Sigmoid colon (tissue), 7 donors: ENCODE measurements at regions of chr20 and their contacts with region 1.

Region 1: DNA sequence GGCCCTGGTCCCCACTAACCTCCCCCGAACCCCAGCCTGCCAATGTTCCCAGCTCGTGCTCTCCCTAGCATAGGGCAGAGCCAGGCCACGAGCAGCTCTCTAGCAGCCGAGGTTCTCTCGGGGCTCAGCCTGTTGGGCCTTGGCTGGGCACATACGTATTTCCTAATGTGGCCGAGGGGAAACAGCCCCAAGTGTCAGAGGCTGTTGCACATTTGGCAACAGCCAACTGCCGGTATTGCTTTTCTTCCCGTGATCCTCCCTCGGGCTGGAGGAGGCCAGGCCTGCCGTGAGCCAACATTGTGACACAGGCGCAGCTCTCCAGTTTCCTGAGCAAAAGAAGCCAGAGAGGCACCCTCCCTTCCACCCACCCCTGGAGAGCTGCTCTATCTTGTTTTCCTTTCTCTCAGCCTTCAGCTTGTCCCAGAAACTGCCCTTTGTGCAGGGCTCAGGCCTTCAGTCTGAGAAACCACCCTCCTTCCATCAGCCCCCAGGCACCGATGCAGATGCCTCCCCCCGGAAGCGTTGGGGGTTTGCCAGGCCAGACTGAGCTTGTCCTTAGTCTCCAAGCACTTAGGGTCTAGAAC is 5.2 kb upstream of the BPI start:
- DNase-seq: peak; percentile 96
- H3K4me3 ChIP-seq: no peak overlapping the region
- H3K27ac ChIP-seq: peak overlapping the region; percentile 74 to 82 (median 80)
- H3K4me1 ChIP-seq: peaks cover 0 to 18% (median 16%) of the 10 kb centered on the region in 4 donors
- H3K27me3 ChIP-seq: peaks cover 0 to 4% (median 0%) of the 10 kb centered on the region in 3 donors
- CTCF ChIP-seq: no peak
- EP300 ChIP-seq: peak in 1 of 4 donors; percentile 13
- POLR2A ChIP-seq: no peak

Region 2: DNA sequence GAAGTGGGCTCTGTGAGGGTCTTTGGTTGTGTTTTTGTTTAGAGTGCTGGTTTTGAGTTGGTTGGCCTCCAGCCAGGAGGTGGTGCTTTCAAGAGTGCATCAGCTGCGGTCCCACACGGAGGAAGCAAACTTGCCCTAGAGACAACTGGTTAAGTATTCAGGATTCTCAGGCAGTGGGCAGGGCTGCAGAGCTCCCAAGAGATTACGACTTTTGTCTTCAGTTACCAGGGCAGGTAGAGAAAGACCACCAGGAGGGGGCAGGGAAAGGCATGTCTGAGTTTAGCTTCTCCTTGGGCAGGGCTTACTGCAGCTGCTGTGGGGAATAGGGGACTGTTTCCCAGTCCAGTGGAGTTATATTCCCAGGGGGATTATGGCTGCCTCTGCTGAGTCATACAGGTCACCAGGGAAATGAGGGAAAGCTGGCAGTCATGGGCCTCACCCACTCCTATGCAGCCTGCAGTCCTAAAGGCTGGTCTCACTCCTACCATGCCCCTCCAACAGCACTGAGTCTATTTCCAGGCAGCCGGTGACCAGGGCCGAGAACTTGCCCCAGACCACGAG is 329.9 kb before region 1 on chr20:
- intact Hi-C with region 1: no loop called
- DNase-seq: no peak
- H3K4me3 ChIP-seq: no peak overlapping the region
- H3K27ac ChIP-seq: no peak overlapping the region
- H3K4me1 ChIP-seq: no peaks in the 10 kb centered on the region
- H3K27me3 ChIP-seq: no peaks in the 10 kb centered on the region
- CTCF ChIP-seq: no peak
- EP300 ChIP-seq: no peak
- POLR2A ChIP-seq: no peak

Region 3: DNA sequence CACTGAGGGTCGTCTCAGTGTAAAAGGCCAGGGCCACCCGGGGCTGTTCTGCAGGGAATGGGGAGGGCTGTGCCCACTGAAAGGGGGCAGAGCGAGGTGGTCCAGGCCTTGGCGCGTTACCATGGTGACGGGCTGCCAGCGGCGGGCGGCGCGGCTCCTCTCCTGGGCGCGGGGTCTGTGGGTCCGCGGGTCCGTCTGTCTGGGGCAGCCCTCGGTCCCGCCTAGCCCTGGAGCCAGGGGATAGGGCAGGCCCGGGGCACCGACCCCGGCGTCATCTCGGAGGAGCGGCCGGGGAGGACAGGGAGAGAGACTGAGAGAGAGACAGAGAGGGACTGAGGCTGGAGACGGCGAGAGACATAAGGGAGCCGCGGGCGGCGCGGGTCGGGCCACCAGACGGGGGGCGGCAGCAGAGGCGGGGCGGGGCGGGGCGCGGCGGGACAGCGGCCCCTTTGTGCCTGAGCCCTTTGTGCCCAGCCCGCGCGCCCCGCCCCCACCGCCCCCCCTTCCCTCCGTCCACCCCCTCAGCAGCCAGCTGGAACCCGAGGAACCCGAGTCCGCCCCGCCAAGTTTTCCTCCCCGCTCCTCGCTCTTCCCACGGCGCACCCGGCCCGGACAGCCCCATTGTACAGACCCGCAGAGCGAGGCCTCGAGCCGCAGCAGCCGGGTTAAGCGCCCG is 38.3 kb before region 1 on chr20 and contains the start of gene KIAA1755:
- intact Hi-C with region 1: loop called (anchors 5 kb)
- DNase-seq: peak; percentile 76
- H3K4me3 ChIP-seq: peak within 1 kb of the TSS; percentile 41 to 58 (median 50)
- H3K27ac ChIP-seq: peak within 1 kb of the TSS; percentile 81 to 85 (median 82)
- H3K4me1 ChIP-seq: peaks cover 0 to 12% (median 8%) of the 10 kb centered on the region in 4 donors
- H3K27me3 ChIP-seq: peaks cover 4 to 39% (median 7%) of the 10 kb centered on the region in 3 donors
- CTCF ChIP-seq: no peak
- EP300 ChIP-seq: no peak
- POLR2A ChIP-seq: no peak
- total RNA-seq, gene KIAA1755: 9.2 to 39.1 (median 17.1) TPM